ENCODE measurements at regions of chr9 and their contacts with region 1.

Region 1: DNA sequence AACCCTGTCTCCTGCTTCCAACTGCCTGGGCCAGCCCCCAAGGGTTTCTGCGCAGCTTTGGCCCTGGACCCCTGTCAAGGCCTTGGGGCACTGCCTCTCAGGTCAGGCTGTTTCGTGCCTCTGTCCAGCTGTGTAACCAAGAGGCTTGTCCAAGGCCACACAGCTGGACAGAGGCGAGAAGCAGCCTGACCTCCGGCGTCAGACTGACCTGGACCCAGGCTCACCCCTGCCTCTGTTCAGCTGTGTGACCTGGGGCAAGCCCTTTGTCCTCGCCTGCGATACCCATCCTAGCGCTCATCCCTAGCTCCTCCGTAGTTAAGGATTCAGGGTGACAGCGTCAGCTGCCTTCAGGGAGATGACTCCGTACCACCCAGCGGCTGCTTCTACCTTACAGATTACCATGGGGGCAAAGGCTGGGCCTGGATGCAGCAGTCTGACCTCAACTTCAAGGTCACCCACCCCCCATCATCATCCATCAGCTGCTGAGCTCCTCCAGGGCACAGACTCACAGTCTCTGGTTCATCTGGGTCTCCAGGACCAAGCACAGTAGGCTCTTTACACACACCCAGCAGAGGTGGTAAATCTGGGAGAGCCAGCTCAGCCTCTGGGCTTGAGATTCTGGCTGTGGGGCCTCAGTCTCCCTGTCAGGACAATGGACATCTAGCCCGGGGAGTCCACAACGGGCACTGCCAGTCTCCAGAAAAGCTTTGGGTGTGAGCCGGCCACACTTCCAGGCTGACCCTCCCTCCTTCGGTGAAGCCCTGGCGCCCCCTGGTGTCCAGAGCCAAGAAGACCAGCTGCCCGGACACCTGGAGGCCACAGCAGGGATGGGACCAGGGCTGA is 7.9 kb downstream of the AK1 start:
- DNase-seq: peak; percentile 83
- H3K4me3 Mint-ChIP-seq: no peak overlapping the region
- H3K27ac Mint-ChIP-seq: no peak overlapping the region
- H3K4me1 Mint-ChIP-seq: peaks cover 17% of the 10 kb centered on the region
- H3K27me3 Mint-ChIP-seq: no peaks in the 10 kb centered on the region

Region 2: GRCh38 chr9:127763918-127764384 is 105.6 kb before region 1 on chr9:
- CTCF ChIA-PET with region 1: interaction called, 11 read pairs
- POLR2A ChIA-PET with region 1: no interaction called
- DNase-seq: no peak
- H3K4me3 Mint-ChIP-seq: no peak overlapping the region
- H3K27ac Mint-ChIP-seq: peak overlapping the region; percentile 28
- H3K4me1 Mint-ChIP-seq: peaks cover 58% of the 10 kb centered on the region
- H3K27me3 Mint-ChIP-seq: no peaks in the 10 kb centered on the region

Region 3: GRCh38 chr9:127802576-127803443 is 66.7 kb before region 1 on chr9 and contains the start of gene FPGS:
- CTCF ChIA-PET with region 1: interaction called, 17 read pairs
- POLR2A ChIA-PET with region 1: interaction called, 5 read pairs
- DNase-seq: peak; percentile 85
- H3K4me3 Mint-ChIP-seq: peak within 1 kb of the TSS; percentile 93
- H3K27ac Mint-ChIP-seq: peak within 1 kb of the TSS; percentile 92
- H3K4me1 Mint-ChIP-seq: peaks cover 32% of the 10 kb centered on the region
- H3K27me3 Mint-ChIP-seq: no peaks in the 10 kb centered on the region
- total RNA-seq, gene FPGS: 65.6 to 65.8 TPM

Region 4: DNA sequence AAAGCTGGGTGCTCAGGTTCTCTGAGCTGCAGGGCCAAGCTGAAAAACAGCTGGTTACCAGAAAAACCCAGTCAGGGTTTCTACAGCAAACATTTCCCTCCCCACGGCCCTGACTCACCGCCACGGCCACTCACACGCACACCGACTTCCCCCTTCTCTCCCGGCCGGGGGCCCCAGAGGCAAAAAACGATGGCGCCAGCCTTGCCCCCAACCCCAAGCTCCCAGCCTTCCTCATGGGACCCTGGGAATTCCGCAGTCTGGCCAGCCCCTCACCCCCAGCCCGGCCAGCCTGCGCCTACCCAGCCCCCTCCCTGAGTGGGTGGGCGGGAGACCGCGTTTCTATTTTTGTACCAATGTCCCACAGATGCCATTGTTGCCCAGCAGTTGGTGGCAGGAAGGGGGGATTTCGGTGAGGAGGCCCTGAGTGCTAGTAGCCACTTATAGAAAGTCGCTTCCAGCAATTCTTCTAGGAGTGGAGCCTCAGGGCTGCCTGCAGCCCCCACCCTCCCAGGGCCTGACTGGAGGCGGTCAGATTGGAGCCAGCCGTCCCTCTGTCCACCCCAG is 33.5 kb before region 1 on chr9:
- CTCF ChIA-PET with region 1: interaction called, 10 read pairs
- POLR2A ChIA-PET with region 1: no interaction called
- DNase-seq: no peak
- H3K4me3 Mint-ChIP-seq: no peak overlapping the region
- H3K27ac Mint-ChIP-seq: no peak overlapping the region
- H3K4me1 Mint-ChIP-seq: peaks cover 4% of the 10 kb centered on the region
- H3K27me3 Mint-ChIP-seq: no peaks in the 10 kb centered on the region

Region 5: DNA sequence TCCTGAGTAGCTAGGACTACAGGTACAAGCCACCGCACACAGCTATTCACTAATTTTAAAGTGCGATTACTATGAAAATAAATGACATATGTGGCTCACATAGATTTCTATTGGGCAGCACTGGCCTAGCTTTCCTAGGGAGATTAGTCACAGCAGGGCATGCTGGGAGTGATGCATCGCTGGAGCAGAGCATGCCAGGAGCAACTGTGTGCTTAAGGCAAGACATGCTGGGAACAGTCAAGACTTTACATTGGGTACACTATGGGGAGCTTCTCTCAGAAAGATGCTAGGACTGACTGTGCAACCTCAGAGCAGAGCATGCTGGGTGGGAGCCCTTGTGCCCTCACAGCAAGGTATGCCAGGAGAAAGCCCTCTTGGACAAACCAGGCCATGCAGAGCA is 20.5 kb after region 1 on chr9:
- CTCF ChIA-PET with region 1: interaction called, 12 read pairs
- POLR2A ChIA-PET with region 1: interaction called, 3 read pairs
- DNase-seq: no peak
- H3K4me3 Mint-ChIP-seq: no peak overlapping the region
- H3K27ac Mint-ChIP-seq: no peak overlapping the region
- H3K4me1 Mint-ChIP-seq: peaks cover 23% of the 10 kb centered on the region
- H3K27me3 Mint-ChIP-seq: no peaks in the 10 kb centered on the region

Region 6: DNA sequence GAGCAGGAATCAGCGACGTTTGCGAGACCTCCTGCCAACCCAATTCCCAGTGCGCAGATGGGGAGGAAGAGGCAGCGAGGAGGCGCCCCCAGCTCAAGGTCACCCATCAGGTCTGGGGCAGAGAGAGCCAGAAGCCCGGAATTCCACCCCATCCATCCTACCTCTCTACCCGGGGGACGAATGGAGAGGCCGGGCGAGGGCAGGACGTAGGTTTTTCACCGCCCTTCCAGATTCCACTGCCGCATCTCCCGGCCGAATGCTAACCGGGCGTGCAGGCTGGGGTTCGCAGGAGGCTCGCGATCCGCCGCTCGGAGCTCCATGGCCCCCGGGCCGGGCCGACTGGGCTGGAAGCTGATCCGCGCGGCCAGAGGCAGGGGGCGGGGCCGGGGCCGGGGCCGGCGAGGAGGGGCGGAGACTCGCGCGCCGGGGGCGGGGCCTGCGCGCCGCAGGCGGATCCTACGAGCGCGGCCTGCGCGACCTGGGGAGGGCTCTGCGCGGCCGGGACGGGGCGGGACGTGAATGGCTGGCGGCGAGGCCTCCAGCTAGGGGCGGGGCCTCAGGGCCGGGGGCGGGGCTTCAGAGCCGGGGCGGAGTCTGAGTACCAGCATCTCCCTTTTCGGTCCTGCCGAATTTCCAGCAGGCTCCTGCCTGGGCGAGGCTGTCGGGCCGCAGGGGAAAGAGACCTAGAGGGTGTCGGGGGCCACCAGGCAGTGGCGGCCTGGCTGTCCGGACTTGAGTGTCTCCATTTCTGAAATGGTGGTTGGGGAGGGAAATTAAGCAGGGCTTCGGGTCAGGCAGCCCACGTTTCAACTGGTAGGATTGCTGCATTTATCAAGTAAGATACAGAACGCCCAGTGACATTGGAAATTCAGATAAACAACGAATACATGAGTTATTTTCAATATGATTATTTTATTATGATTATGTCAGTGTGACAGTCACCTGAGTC is 47.4 kb after region 1 on chr9 and contains the start of gene ST6GALNAC4:
- CTCF ChIA-PET with region 1: interaction called, 19 read pairs
- POLR2A ChIA-PET with region 1: no interaction called
- DNase-seq: peak; percentile 96
- H3K4me3 Mint-ChIP-seq: peak within 1 kb of the TSS; percentile 72
- H3K27ac Mint-ChIP-seq: peak within 1 kb of the TSS; percentile 65
- H3K4me1 Mint-ChIP-seq: peaks cover 65% of the 10 kb centered on the region
- H3K27me3 Mint-ChIP-seq: peaks cover under 1% of the 10 kb centered on the region
- total RNA-seq, gene ST6GALNAC4: 19.4 to 21.5 TPM

Region 7: DNA sequence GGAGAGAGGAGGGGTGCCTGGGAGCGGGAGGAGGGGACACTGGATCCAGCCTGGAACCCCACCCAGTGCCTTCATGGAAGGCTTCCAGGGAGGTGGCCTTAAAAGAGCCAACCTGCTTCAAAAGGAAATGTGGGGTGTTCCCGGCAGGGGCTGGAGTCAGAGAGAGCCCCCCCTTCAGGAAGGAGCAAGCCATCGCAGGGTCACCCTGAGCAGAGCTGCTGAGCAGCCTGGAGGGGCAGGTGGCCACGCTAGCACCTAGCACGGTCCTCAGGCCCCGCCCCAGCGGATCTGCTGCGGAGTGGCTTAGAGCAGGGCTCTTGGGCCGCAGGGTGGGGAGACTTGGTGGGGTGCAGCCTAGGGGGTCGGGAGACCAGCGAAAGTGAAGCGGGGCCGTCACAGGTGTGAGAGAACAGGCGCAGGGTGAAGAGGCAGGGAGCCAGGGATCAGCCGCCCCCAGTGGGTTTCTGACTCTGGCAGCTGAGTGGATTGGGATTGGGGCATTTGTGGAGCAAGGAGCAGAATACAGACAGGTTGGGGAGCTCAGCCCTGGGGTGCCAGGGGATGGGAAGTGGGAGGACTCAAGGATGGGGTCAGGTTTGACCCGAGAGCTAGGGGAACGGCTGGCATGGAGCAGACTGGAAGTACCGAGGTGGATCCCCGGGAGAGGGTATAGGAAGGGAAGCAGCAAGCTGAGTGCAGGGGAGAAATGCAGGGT is 281.2 kb after region 1 on chr9:
- CTCF ChIA-PET with region 1: no interaction called
- POLR2A ChIA-PET with region 1: no interaction called
- DNase-seq: no peak
- H3K4me3 Mint-ChIP-seq: no peak overlapping the region
- H3K27ac Mint-ChIP-seq: no peak overlapping the region
- H3K4me1 Mint-ChIP-seq: no peaks in the 10 kb centered on the region
- H3K27me3 Mint-ChIP-seq: no peaks in the 10 kb centered on the region

Measured in activated CD4-positive, alpha-beta memory T cell treated with anti-CD3 and anti-CD28 coated beads, Interleukin-2, amount 10 ng/mL, durations not matched to agents 7 days and 5 days (primary cell).